Transverse colon (tissue), 4 donors: ENCODE measurements at regions of chr4 and their contacts with region 1.

Region 1: GRCh38 chr4:1048773-1049597 is 37.6 kb downstream of the FGFRL1 start:
- DNase-seq: no peak
- H3K4me3 ChIP-seq: no peak overlapping the region
- H3K27ac ChIP-seq: no peak overlapping the region
- H3K4me1 ChIP-seq: peaks cover 3 to 37% (median 25%) of the 10 kb centered on the region in 4 donors
- H3K27me3 ChIP-seq: peaks cover 55% of the 10 kb centered on the region
- CTCF ChIP-seq: no peak
- EP300 ChIP-seq: no peak
- POLR2A ChIP-seq: no peak

Region 2: GRCh38 chr4:987624-988513 is 61.1 kb before region 1 on chr4:
- in situ Hi-C with region 1: no loop called
- intact Hi-C with region 1: loop called (anchors 2 kb)
- DNase-seq: no peak
- H3K4me3 ChIP-seq: peak overlapping the region in 3 of 4 donors; percentile 72 to 94 (median 86)
- H3K27ac ChIP-seq: peak overlapping the region in 3 of 4 donors; percentile 78 to 83 (median 81)
- H3K4me1 ChIP-seq: peaks cover 26 to 43% (median 37%) of the 10 kb centered on the region in 4 donors
- H3K27me3 ChIP-seq: no peaks in the 10 kb centered on the region
- CTCF ChIP-seq: no peak
- EP300 ChIP-seq: no peak
- POLR2A ChIP-seq: no peak